OCI-LY7 (cell line): ENCODE measurements at regions of chr13 and their contacts with region 1.

Region 1: GRCh38 chr13:41013835-41014234 is 5.3 kb downstream of the ELF1 start:
- DNase-seq: no peak
- H3K4me3 ChIP-seq: peak overlapping the region; percentile 84
- H3K27ac ChIP-seq: peak overlapping the region; percentile 94
- H3K4me1 ChIP-seq: peaks cover 53% of the 10 kb centered on the region
- CTCF ChIP-seq: no peak

Region 2: DNA sequence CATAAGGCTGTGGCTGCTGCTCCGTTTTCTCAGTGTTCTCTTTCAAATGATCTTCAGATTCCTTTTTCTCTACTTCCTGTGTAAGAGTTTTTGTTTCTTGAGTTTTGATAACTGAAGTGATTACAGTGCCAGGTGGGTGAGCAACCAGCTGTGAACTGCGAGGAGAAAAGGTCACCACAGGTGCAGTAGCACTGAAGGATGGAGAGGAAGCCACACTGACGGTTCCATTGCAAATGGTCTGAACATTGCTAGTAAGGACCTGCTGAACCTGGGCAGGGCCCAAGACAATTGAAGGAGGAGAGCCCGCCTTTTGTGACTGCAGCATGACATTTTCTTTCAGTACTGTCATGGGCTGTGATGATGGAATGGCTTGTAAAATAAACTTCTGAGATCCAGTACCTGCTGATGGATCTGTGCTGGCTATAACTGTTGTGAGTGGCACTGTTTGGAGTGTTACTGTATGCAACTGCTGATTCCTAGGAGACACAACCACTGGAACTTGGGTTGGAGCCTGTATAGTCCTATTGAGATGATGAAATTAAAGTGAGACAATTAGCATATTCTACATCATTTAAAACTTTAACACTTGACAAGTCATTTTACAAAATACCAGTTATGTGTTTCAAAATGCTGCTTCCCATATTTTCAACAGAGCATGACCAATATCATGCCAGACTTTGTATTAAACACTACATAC is 80.2 kb before region 1 on chr13:
- CTCF ChIA-PET with region 1: no interaction called
- POLR2A ChIA-PET with region 1: interaction called, 8 read pairs
- intact Hi-C with region 1: loop called (anchors 2 kb)
- DNase-seq: peak; percentile 97
- H3K4me3 ChIP-seq: peak overlapping the region; percentile 52
- H3K27ac ChIP-seq: peak overlapping the region; percentile 95
- H3K4me1 ChIP-seq: peaks cover 58% of the 10 kb centered on the region
- CTCF ChIP-seq: no peak

Region 3: GRCh38 chr13:40969169-40969901 is 44.5 kb before region 1 on chr13:
- CTCF ChIA-PET with region 1: no interaction called
- POLR2A ChIA-PET with region 1: interaction called, 18 read pairs
- intact Hi-C with region 1: no loop called
- DNase-seq: peak; percentile 50
- H3K4me3 ChIP-seq: peak overlapping the region; percentile 85
- H3K27ac ChIP-seq: peak overlapping the region; percentile 32
- H3K4me1 ChIP-seq: peaks cover 100% of the 10 kb centered on the region
- CTCF ChIP-seq: no peak